IMR-90 (cell line): ENCODE measurements at regions of chr6 and their contacts with region 1.

Region 1: DNA sequence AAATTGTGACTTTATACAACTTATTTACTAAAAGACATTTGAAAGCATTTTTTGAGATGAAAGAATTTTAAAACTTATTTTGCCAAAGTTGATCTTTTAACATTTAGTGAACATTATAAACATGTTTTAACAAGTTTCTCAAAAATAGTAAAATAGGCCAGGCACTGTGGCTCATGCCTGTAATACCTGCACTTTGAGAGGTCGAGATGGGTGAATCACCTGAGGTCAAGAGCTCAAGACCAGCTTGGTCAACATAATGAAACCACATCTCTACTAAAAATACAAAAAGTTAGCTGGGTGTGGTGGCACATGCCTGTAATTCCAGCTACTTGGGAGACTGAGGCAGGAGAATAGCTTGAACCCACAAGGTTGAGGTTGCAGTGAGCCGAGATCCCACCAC is 78.6 kb downstream of the CLVS2 start:
- DNase-seq: no peak
- ATAC-seq: no peak
- H3K4me3 ChIP-seq: no peak overlapping the region
- H3K27ac ChIP-seq: no peak overlapping the region
- H3K4me1 ChIP-seq: no peaks in the 10 kb centered on the region
- H3K27me3 ChIP-seq: no peaks in the 10 kb centered on the region
- CTCF ChIP-seq: no peak
- POLR2A ChIP-seq: no peak
- RAD21 ChIP-seq: no peak

Region 2: GRCh38 chr6:123042401-123042800 is 32.2 kb before region 1 on chr6:
- CTCF ChIA-PET with region 1: no interaction called
- POLR2A ChIA-PET with region 1: no interaction called
- dilution Hi-C with region 1: no loop called
- in situ Hi-C with region 1: no loop called
- intact Hi-C with region 1: loop called (anchors 1 kb)
- DNase-seq: no peak
- ATAC-seq: no peak
- H3K4me3 ChIP-seq: no peak overlapping the region
- H3K27ac ChIP-seq: no peak overlapping the region
- H3K4me1 ChIP-seq: no peaks in the 10 kb centered on the region
- H3K27me3 ChIP-seq: no peaks in the 10 kb centered on the region
- CTCF ChIP-seq: no peak
- POLR2A ChIP-seq: no peak
- RAD21 ChIP-seq: no peak